Naive thymus-derived CD4-positive, alpha-beta T cell (primary cell): ENCODE measurements at regions of chr11 and their contacts with region 1.

Region 1: DNA sequence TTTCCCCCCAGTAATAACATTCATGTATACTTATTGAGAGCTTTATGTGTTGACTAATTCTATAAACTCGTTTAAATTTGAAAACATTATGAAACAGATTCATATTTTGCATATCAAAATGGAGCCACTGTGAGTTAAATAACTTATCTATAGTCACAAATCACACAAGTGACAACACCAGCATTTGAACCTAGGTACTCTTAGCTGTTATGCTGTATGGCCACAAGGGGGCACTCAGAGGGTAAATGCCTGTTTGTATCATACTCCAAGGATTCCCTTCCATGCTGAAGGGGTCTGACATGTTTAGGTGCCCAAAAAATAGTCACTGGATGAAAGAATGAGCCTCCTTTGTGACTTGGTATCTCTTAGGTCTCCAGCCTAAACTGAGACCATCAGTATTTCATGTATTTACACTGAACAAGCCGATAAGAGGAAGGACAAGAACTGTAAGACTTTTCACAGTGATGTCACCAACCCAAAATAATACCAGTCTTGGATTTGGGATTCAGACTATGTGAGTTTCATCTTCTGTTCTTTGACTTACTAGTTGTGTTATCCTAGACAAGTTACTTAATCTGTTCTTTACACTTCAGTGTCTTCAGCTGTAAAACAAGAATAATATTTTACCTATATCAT is 12.2 kb upstream of the OR52D1 start:
- DNase-seq: peak in 5 of 9 donors; percentile 27 to 40 (median 34)
- ATAC-seq: peak; percentile 60
- H3K4me3 ChIP-seq: no peak overlapping the region
- H3K4me3 Mint-ChIP-seq: no peak overlapping the region
- H3K27ac ChIP-seq: no peak overlapping the region
- H3K27ac Mint-ChIP-seq: no peak overlapping the region
- H3K4me1 ChIP-seq: no peaks in the 10 kb centered on the region
- H3K4me1 Mint-ChIP-seq: no peaks in the 10 kb centered on the region
- H3K27me3 ChIP-seq: no peaks in the 10 kb centered on the region
- H3K27me3 Mint-ChIP-seq: peaks cover 4 to 30% (median 19%) of the 10 kb centered on the region in 5 donors

Region 2: GRCh38 chr11:5666391-5666770 is 190.1 kb after region 1 on chr11:
- CTCF ChIA-PET with region 1: no interaction called
- POLR2A ChIA-PET with region 1: no interaction called
- intact Hi-C with region 1: no loop called
- DNase-seq: no peak
- ATAC-seq: no peak
- H3K4me3 ChIP-seq: no peak overlapping the region
- H3K4me3 Mint-ChIP-seq: no peak overlapping the region
- H3K27ac ChIP-seq: no peak overlapping the region
- H3K27ac Mint-ChIP-seq: peak overlapping the region in 1 of 9 donors; percentile 49
- H3K4me1 ChIP-seq: no peaks in the 10 kb centered on the region
- H3K4me1 Mint-ChIP-seq: no peaks in the 10 kb centered on the region
- H3K27me3 ChIP-seq: no peaks in the 10 kb centered on the region
- H3K27me3 Mint-ChIP-seq: no peaks in the 10 kb centered on the region

Region 3: GRCh38 chr11:5712507-5712906 is 236.2 kb after region 1 on chr11:
- CTCF ChIA-PET with region 1: no interaction called
- POLR2A ChIA-PET with region 1: no interaction called
- intact Hi-C with region 1: loop called in 1 of 2 experiments (anchors 5 kb)
- DNase-seq: peak in 3 of 9 donors; percentile 8 to 33 (median 22)
- ATAC-seq: peak; percentile 42
- H3K4me3 ChIP-seq: no peak overlapping the region
- H3K4me3 Mint-ChIP-seq: no peak overlapping the region
- H3K27ac ChIP-seq: no peak overlapping the region
- H3K27ac Mint-ChIP-seq: peak overlapping the region in 7 of 9 donors; percentile 6 to 83 (median 19)
- H3K4me1 ChIP-seq: no peaks in the 10 kb centered on the region
- H3K4me1 Mint-ChIP-seq: peaks cover 0 to 13% (median 4%) of the 10 kb centered on the region in 7 donors
- H3K27me3 ChIP-seq: no peaks in the 10 kb centered on the region
- H3K27me3 Mint-ChIP-seq: no peaks in the 10 kb centered on the region

Region 4: GRCh38 chr11:5808500-5809121 is 332.3 kb after region 1 on chr11 and contains the start of gene OR52N2:
- CTCF ChIA-PET with region 1: interaction called, 6 read pairs
- POLR2A ChIA-PET with region 1: no interaction called
- intact Hi-C with region 1: loop called in 1 of 2 experiments (anchors 1 kb)
- DNase-seq: peak; percentile 38 to 73 (median 66)
- ATAC-seq: peak; percentile 92
- H3K4me3 ChIP-seq: peak within 1 kb of the TSS; percentile 61
- H3K4me3 Mint-ChIP-seq: peak within 1 kb of the TSS; percentile 86 to 95 (median 90)
- H3K27ac ChIP-seq: no peak within 1 kb of the TSS
- H3K27ac Mint-ChIP-seq: peak within 1 kb of the TSS in 8 of 9 donors; percentile 1 to 87 (median 20)
- H3K4me1 ChIP-seq: no peaks in the 10 kb centered on the region
- H3K4me1 Mint-ChIP-seq: peaks cover 7 to 16% (median 10%) of the 10 kb centered on the region in 7 donors
- H3K27me3 ChIP-seq: peaks cover 0 to 6% of the 10 kb centered on the region in 2 donors
- H3K27me3 Mint-ChIP-seq: peaks cover 12 to 29% (median 25%) of the 10 kb centered on the region in 5 donors
- total RNA-seq, gene OR52N2: not detected

Region 5: GRCh38 chr11:5891216-5891800 is 415.0 kb after region 1 on chr11:
- CTCF ChIA-PET with region 1: interaction called, 4 read pairs
- POLR2A ChIA-PET with region 1: no interaction called
- intact Hi-C with region 1: loop called (anchors 1 to 10 kb)
- DNase-seq: peak in 3 of 9 donors; percentile 0 to 10 (median 1)
- ATAC-seq: no peak
- H3K4me3 ChIP-seq: no peak overlapping the region
- H3K4me3 Mint-ChIP-seq: no peak overlapping the region
- H3K27ac ChIP-seq: no peak overlapping the region
- H3K27ac Mint-ChIP-seq: no peak overlapping the region
- H3K4me1 ChIP-seq: no peaks in the 10 kb centered on the region
- H3K4me1 Mint-ChIP-seq: no peaks in the 10 kb centered on the region
- H3K27me3 ChIP-seq: peaks cover 5% of the 10 kb centered on the region in 2 donors
- H3K27me3 Mint-ChIP-seq: peaks cover 7 to 27% (median 20%) of the 10 kb centered on the region in 5 donors

Region 6: DNA sequence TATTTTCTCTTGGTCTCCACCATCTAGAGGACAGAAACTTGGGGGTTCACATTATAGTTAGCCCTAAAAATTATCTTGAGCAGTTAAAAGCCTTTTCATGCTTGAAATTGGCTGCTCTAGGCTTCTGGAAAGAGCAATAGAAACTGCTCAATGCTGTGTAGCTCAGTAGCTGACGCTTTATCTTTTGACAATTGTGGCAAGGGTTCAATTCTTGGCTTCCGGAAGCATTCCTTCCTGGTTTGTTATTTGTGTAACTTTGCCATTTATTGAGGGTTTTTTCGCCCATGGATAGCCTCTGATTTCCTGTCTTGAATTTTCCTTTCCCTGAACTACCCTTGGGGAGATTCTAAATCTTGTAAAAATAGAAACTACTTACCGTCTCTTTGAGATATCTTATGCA is 564.6 kb after region 1 on chr11:
- CTCF ChIA-PET with region 1: no interaction called
- POLR2A ChIA-PET with region 1: no interaction called
- intact Hi-C with region 1: no loop called
- DNase-seq: no peak
- ATAC-seq: no peak
- H3K4me3 ChIP-seq: no peak overlapping the region
- H3K4me3 Mint-ChIP-seq: no peak overlapping the region
- H3K27ac ChIP-seq: no peak overlapping the region
- H3K27ac Mint-ChIP-seq: no peak overlapping the region
- H3K4me1 ChIP-seq: no peaks in the 10 kb centered on the region
- H3K4me1 Mint-ChIP-seq: no peaks in the 10 kb centered on the region
- H3K27me3 ChIP-seq: no peaks in the 10 kb centered on the region
- H3K27me3 Mint-ChIP-seq: peaks cover 5 to 28% (median 19%) of the 10 kb centered on the region in 5 donors